ENCODE measurements at regions of chr9 and their contacts with region 1.

Region 1: GRCh38 chr9:114392749-114393112 is 4.9 kb upstream of the AKNA start:
- DNase-seq: peak in 2 of 4 experiments; percentile 35 to 50
- ATAC-seq: peak; percentile 65
- H3K4me3 ChIP-seq: no peak overlapping the region
- H3K27ac ChIP-seq: no peak overlapping the region
- H3K4me1 ChIP-seq: peaks cover 14 to 27% of the 10 kb centered on the region in 2 experiments
- H3K27me3 ChIP-seq: no peaks in the 10 kb centered on the region
- CTCF ChIP-seq: no peak
- EP300 ChIP-seq: no peak
- POLR2A ChIP-seq: no peak
- RAD21 ChIP-seq: no peak

Region 2: DNA sequence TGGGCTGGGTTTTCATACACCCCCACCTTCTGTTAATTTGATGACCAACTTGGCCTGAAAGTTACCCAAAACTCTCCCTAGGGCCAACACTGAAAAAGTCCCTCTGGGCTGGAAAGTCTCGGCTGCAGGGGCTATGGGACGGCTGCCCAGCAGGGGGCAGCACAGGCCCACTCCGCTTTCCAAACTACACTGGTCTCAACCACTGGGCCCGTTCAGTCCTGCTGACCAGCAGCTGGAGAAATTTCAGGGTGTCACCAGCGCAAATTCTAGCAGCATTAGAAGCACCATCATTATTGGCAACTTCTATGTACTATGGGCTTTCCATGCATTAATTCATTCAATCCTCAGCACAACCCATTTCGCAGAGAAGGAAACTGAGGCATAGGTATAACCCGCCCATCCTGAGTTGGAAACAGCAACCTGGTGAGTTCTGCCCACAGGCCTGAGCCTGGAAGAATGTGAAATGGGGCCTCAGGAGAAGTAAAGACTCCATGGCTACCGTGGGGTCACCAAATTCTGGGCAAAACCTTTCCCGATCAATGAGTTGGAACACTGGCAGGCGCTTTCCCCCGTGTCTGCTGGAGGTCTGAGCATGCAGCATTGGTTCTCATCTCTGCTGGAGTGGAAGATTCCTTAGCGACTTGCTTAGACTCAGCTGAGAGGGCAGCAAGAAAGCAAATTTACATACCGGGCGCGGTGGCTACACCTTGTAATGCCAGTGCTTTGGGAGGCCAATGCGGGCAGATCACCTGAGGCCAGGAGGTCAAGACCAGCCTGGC is 53.4 kb before region 1 on chr9:
- CTCF ChIA-PET with region 1: no interaction called
- POLR2A ChIA-PET with region 1: no interaction called
- in situ Hi-C with region 1: no loop called
- intact Hi-C with region 1: loop called (anchors 2 kb)
- DNase-seq: peak; percentile 72 to 88 (median 86)
- ATAC-seq: peak; percentile 84
- H3K4me3 ChIP-seq: no peak overlapping the region
- H3K27ac ChIP-seq: no peak overlapping the region
- H3K4me1 ChIP-seq: peaks cover 0 to 3% of the 10 kb centered on the region in 2 experiments; a peak in 1 of 5 replicates
- H3K27me3 ChIP-seq: no peaks in the 10 kb centered on the region
- CTCF ChIP-seq: peak; percentile 83 to 95 (median 86)
- EP300 ChIP-seq: no peak
- POLR2A ChIP-seq: no peak
- RAD21 ChIP-seq: peak; percentile 14 to 56; a peak in 2 of 4 replicates